ENCODE measurements at regions of chr2 and their contacts with region 1.

Region 1: GRCh38 chr2:38750891-38751595 is at the start of gene SRSF7:
- DNase-seq: peak; percentile 98
- ATAC-seq: peak; percentile 83
- H3K4me3 Mint-ChIP-seq: peak within 1 kb of the TSS; percentile 94
- H3K27ac Mint-ChIP-seq: peak within 1 kb of the TSS; percentile 100
- H3K4me1 Mint-ChIP-seq: peaks cover 51% of the 10 kb centered on the region
- H3K27me3 Mint-ChIP-seq: no peaks in the 10 kb centered on the region
- total RNA-seq, gene SRSF7: 194 to 309 TPM

Region 2: GRCh38 chr2:36966370-36967235 is 1784.4 kb before region 1 on chr2 and contains the start of gene STRN:
- CTCF ChIA-PET with region 1: no interaction called
- POLR2A ChIA-PET with region 1: no interaction called
- intact Hi-C with region 1: loop called in 1 of 2 experiments (anchors 5 kb)
- DNase-seq: peak; percentile 99
- ATAC-seq: peak; percentile 95
- H3K4me3 Mint-ChIP-seq: peak within 1 kb of the TSS; percentile 100
- H3K27ac Mint-ChIP-seq: peak within 1 kb of the TSS; percentile 97
- H3K4me1 Mint-ChIP-seq: peaks cover 41% of the 10 kb centered on the region
- H3K27me3 Mint-ChIP-seq: no peaks in the 10 kb centered on the region
- total RNA-seq, gene STRN: 27.7 to 32.0 TPM

Region 3: DNA sequence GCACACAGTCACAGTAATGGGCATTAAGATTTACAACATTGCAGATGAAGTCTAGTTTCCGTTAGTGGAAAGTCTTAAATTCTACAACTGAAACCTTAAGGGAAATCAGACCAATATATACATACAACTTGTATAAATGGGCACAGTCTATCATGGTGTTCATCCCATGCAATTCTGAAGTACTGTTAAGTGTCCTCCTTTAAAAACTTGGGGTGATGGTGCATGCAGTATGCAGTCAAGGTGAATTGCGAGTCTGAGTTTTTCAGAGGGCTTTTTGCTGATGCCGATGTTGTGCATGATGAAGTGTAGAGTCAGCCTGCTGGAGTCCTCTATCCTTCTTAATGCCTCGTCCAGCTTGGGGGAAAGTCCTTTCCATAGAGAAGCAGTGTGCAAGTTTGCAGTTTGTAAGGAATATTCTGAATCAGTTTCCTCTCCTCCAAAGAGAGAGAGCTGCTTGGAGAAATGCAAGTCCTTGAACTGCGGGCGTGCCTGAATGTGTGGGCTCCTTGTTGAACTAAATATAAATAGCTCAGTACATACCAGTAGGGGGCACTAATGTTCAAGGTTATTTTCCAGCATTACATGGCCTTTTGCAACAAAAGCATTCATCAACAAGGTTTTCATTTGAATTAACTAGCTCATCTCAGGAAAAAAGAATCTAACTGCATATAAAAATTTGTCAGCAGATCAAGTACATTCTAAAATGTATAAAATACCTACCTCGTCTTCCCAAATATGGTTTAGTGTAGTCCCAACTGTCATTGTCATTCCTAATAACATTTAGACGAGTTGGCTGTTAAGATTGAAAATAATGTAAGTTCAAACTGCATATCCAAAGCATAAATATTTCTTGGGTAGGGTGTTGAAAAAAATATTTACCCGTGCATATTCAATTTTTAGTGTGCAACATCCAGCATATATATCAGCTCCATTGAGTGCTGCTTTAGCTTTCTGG is 169.6 kb before region 1 on chr2:
- CTCF ChIA-PET with region 1: interaction called, 10 read pairs
- POLR2A ChIA-PET with region 1: interaction called, 7 read pairs
- intact Hi-C with region 1: no loop called
- DNase-seq: peak; percentile 60
- ATAC-seq: peak; percentile 87
- H3K4me3 Mint-ChIP-seq: no peak overlapping the region
- H3K27ac Mint-ChIP-seq: no peak overlapping the region
- H3K4me1 Mint-ChIP-seq: peaks cover 32% of the 10 kb centered on the region
- H3K27me3 Mint-ChIP-seq: no peaks in the 10 kb centered on the region

Region 4: DNA sequence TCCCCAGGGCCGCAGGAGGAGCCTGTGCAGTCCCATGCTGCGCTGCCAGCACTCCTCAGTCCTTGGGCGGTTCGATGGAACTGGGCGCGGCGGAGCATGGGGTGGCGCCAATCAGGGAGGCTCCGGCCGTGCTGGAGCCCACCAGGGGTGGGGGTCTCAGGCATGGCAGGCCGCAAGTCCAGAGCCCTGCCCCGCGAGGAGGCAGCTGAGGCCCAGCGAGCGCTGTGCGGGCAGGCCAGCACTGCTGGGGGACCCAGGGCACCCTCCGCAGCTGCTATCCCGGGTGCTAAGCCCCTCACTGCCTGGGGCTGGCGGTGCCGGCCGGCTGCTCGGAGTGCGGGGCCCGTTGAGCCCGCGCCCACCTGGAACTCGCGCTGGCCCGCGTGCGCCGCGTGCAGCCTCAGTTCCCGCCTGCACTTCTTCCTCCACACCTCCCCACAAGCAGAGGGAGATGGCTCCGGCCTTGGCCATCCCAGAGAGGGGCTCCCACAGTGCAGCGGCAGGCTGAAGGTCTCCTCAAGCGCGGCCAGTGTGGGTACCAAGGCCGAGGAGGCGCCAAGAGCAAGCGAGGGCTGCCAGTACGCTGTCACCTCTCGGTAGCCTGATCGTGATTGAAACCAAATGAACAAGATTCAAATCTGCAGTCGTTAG is 107.9 kb before region 1 on chr2:
- CTCF ChIA-PET with region 1: no interaction called
- POLR2A ChIA-PET with region 1: no interaction called
- intact Hi-C with region 1: no loop called
- DNase-seq: no peak
- ATAC-seq: no peak
- H3K4me3 Mint-ChIP-seq: peak overlapping the region; percentile 48
- H3K27ac Mint-ChIP-seq: peak overlapping the region; percentile 96
- H3K4me1 Mint-ChIP-seq: peaks cover 31% of the 10 kb centered on the region
- H3K27me3 Mint-ChIP-seq: no peaks in the 10 kb centered on the region

Region 5: GRCh38 chr2:38653715-38654527 is 97.1 kb before region 1 on chr2:
- CTCF ChIA-PET with region 1: no interaction called
- POLR2A ChIA-PET with region 1: interaction called, 13 read pairs
- intact Hi-C with region 1: loop called in 1 of 2 experiments (anchors 1 kb)
- DNase-seq: peak; percentile 87
- ATAC-seq: peak; percentile 81
- H3K4me3 Mint-ChIP-seq: peak overlapping the region; percentile 44
- H3K27ac Mint-ChIP-seq: peak overlapping the region; percentile 98
- H3K4me1 Mint-ChIP-seq: peaks cover 58% of the 10 kb centered on the region
- H3K27me3 Mint-ChIP-seq: no peaks in the 10 kb centered on the region

Region 6: GRCh38 chr2:38672445-38673391 is 78.3 kb before region 1 on chr2:
- CTCF ChIA-PET with region 1: interaction called, 5 read pairs
- POLR2A ChIA-PET with region 1: interaction called, 10 read pairs
- intact Hi-C with region 1: loop called in 1 of 2 experiments (anchors 1 kb)
- DNase-seq: no peak
- ATAC-seq: no peak
- H3K4me3 Mint-ChIP-seq: no peak overlapping the region
- H3K27ac Mint-ChIP-seq: peak overlapping the region; percentile 59
- H3K4me1 Mint-ChIP-seq: peaks cover 65% of the 10 kb centered on the region
- H3K27me3 Mint-ChIP-seq: no peaks in the 10 kb centered on the region

Region 7: GRCh38 chr2:38734299-38735058 is 16.6 kb before region 1 on chr2:
- CTCF ChIA-PET with region 1: interaction called, 10 read pairs
- POLR2A ChIA-PET with region 1: interaction called, 9 read pairs
- intact Hi-C with region 1: no loop called
- DNase-seq: no peak
- ATAC-seq: no peak
- H3K4me3 Mint-ChIP-seq: no peak overlapping the region
- H3K27ac Mint-ChIP-seq: no peak overlapping the region
- H3K4me1 Mint-ChIP-seq: peaks cover 16% of the 10 kb centered on the region
- H3K27me3 Mint-ChIP-seq: no peaks in the 10 kb centered on the region

Region 8: DNA sequence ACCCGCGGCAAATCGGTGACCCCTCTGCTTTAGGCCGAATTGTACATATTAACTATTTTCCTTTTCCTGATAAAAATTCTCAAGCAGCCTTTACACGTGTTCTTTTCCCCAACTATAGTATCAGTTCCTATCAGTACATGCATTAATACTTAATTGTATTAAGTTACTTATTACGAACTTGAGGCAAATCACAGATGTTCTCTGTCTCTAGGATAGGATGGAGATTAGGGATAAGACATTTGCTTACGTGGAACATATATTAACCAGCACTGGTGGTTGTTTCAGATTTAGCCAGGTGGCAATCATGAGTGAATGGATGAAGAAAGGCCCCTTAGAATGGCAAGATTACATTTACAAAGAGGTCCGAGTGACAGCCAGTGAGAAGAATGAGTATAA is 27.6 kb after region 1 on chr2:
- CTCF ChIA-PET with region 1: interaction called, 3 read pairs
- POLR2A ChIA-PET with region 1: interaction called, 17 read pairs
- intact Hi-C with region 1: loop called (anchors 1 kb)
- DNase-seq: no peak
- ATAC-seq: no peak
- H3K4me3 Mint-ChIP-seq: peak overlapping the region; percentile 97
- H3K27ac Mint-ChIP-seq: peak overlapping the region; percentile 95
- H3K4me1 Mint-ChIP-seq: peaks cover 7% of the 10 kb centered on the region
- H3K27me3 Mint-ChIP-seq: peaks cover 13% of the 10 kb centered on the region

Measured in activated CD4-positive, alpha-beta T cell treated with anti-CD3 and anti-CD28 coated beads for 36 hours (primary cell).